MCF 10A (cell line): ENCODE measurements at regions of chr3 and their contacts with region 1.

Region 1: DNA sequence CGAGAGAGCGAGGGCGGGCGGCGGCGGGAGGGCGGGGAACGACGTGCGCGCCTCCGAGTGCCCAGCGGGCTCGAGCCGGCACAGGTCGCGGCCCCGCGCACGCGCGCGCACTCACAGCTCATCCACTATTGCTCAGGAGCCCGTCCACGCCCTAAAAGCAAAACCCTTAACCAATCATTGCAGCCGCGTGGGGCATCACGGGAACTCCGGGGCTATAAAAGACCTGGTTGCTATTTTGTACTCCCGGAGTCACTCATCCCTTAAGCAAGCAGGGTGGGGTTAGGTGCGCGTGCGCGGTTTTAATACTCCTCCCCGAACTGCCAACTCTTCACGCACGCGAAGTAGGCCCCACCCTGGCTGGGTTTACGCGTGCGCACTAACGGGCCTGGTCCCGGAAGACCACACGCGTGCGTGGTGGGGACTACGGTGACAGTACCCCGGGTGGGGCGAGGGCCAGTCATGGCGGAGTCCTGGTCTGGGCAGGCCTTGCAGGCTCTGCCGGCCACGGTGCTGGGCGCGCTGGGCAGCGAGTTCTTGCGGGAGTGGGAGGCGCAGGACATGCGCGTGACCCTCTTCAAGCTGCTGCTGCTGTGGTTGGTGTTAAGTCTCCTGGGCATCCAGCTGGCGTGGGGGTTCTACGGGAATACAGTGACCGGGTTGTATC is at the starts of genes RHOA and TCTA:
- DNase-seq: peak; percentile 100
- H3K4me3 Mint-ChIP-seq: peak within 1 kb of the TSS; percentile 90
- H3K27ac Mint-ChIP-seq: peak within 1 kb of the TSS; percentile 94
- H3K4me1 Mint-ChIP-seq: peaks cover 32% of the 10 kb centered on the region
- H3K27me3 Mint-ChIP-seq: no peaks in the 10 kb centered on the region
- CTCF ChIP-seq: no peak
- total RNA-seq, gene RHOA: 273 and 298 TPM in 2 replicates
- total RNA-seq, gene TCTA: 14.0 and 17.2 TPM in 2 replicates

Region 2: GRCh38 chr3:49295489-49296058 is 116.5 kb before region 1 on chr3:
- CTCF ChIA-PET with region 1: interaction called, 4 read pairs
- POLR2A ChIA-PET with region 1: interaction called, 10 read pairs
- intact Hi-C with region 1: no loop called
- DNase-seq: peak; percentile 35
- H3K4me3 Mint-ChIP-seq: no peak overlapping the region
- H3K27ac Mint-ChIP-seq: peak overlapping the region; percentile 23
- H3K4me1 Mint-ChIP-seq: peaks cover 7% of the 10 kb centered on the region
- H3K27me3 Mint-ChIP-seq: no peaks in the 10 kb centered on the region
- CTCF ChIP-seq: peak; percentile 55

Region 3: GRCh38 chr3:49351521-49352011 is 60.5 kb before region 1 on chr3:
- CTCF ChIA-PET with region 1: no interaction called
- POLR2A ChIA-PET with region 1: interaction called, 49 read pairs
- intact Hi-C with region 1: loop called (anchors 2 kb)
- DNase-seq: peak; percentile 76
- H3K4me3 Mint-ChIP-seq: peak overlapping the region; percentile 45
- H3K27ac Mint-ChIP-seq: peak overlapping the region; percentile 82
- H3K4me1 Mint-ChIP-seq: peaks cover 40% of the 10 kb centered on the region
- H3K27me3 Mint-ChIP-seq: no peaks in the 10 kb centered on the region
- CTCF ChIP-seq: no peak

Region 4: GRCh38 chr3:49377483-49377882 is 34.6 kb before region 1 on chr3:
- CTCF ChIA-PET with region 1: interaction called, 6 read pairs
- POLR2A ChIA-PET with region 1: interaction called, 4 read pairs
- intact Hi-C with region 1: loop called (anchors 5 kb)
- DNase-seq: peak; percentile 60
- H3K4me3 Mint-ChIP-seq: no peak overlapping the region
- H3K27ac Mint-ChIP-seq: peak overlapping the region; percentile 70
- H3K4me1 Mint-ChIP-seq: peaks cover 20% of the 10 kb centered on the region
- H3K27me3 Mint-ChIP-seq: no peaks in the 10 kb centered on the region
- CTCF ChIP-seq: no peak

Region 5: GRCh38 chr3:49428697-49429100 is 16.6 kb after region 1 on chr3:
- CTCF ChIA-PET with region 1: interaction called, 6 read pairs
- POLR2A ChIA-PET with region 1: interaction called, 34 read pairs
- intact Hi-C with region 1: loop called (anchors 1 kb)
- DNase-seq: no peak
- H3K4me3 Mint-ChIP-seq: peak overlapping the region; percentile 89
- H3K27ac Mint-ChIP-seq: peak overlapping the region; percentile 99
- H3K4me1 Mint-ChIP-seq: peaks cover 5% of the 10 kb centered on the region
- H3K27me3 Mint-ChIP-seq: no peaks in the 10 kb centered on the region
- CTCF ChIP-seq: no peak

Region 6: DNA sequence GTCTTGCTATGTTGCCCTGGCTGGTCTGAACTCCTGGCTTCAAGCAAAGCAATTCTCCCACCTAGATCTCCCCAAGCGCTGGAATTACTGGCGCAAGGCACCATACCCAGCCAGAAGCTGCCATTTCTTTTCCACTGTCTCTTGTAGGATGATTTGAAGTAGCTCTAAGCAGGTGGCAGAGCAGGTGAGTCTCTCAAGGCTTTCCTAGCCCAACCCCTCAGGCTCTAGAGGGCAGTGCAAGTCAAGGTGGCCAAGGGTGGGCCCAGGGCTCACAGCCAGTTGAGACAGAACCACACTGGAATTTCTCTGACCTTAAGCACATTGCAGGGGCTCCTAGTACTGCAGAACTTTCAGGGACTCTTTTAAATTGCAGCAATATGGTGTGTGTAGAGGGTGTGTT is 42.4 kb after region 1 on chr3:
- CTCF ChIA-PET with region 1: interaction called, 4 read pairs
- POLR2A ChIA-PET with region 1: interaction called, 4 read pairs
- intact Hi-C with region 1: loop called (anchors 1 kb)
- DNase-seq: peak; percentile 68
- H3K4me3 Mint-ChIP-seq: no peak overlapping the region
- H3K27ac Mint-ChIP-seq: no peak overlapping the region
- H3K4me1 Mint-ChIP-seq: peaks cover 10% of the 10 kb centered on the region
- H3K27me3 Mint-ChIP-seq: no peaks in the 10 kb centered on the region
- CTCF ChIP-seq: no peak

Region 7: DNA sequence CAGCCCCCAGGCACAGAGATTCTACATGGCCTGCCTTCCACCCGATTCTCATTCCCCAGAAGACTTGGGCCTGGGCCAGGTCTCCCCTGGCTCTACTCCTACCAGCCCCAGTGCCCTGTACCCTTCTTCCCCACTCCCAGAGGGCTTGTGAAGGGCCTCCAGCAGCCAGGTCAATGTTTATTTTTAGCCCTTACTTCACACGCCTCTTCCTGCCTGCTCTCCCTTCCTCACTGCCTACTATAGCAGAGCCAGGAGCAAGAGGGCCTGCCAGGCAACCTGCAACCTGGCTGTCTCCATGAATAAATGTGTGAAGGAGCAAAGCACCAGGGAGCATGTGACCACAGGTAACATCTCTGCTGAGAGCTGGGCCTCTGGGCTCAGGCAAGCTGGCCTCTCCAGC is 235.6 kb after region 1 on chr3:
- CTCF ChIA-PET with region 1: no interaction called
- POLR2A ChIA-PET with region 1: no interaction called
- intact Hi-C with region 1: no loop called
- DNase-seq: no peak
- H3K4me3 Mint-ChIP-seq: no peak overlapping the region
- H3K27ac Mint-ChIP-seq: no peak overlapping the region
- H3K4me1 Mint-ChIP-seq: no peaks in the 10 kb centered on the region
- H3K27me3 Mint-ChIP-seq: no peaks in the 10 kb centered on the region
- CTCF ChIP-seq: no peak

Region 8: DNA sequence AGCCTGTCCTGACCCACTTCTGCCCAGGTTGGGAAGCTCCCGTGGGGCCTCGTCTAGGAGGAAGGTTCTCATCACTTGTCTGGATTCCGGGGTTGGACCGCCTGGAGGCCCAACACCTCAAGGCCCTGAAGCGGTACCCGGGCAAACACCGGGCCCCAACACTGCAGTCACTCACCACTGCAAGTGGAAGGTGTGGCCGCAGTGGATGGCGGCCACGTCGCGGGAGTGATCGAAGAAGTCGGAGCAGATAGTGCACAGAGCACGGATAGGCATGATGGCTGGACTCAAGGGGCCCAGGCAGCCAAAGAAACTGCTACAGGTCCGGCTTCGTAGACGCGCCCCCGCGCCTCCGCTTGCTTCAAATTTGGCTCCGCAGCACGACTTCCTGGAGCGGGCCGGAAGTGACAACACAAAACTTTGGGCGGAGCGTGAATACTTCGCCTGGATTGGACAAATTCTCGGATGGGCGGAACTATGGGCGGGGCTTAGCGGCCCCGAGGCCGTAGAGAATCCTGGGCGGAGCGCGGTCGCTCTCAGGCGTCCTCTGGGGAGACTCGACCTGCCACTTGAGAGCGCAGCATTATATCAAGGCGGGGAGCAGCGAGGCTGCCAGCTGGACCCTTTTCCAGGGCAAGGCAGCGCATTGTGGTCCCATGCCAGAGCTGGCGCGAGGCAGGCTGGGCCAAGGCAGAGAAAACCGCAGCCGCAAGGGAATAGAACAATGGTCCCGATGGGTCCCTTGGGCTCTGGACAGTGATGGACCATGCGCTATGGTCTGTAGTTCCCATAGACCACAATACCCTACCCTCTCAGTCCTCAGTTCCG is 444.3 kb after region 1 on chr3 and contains the start of gene TRAIP:
- CTCF ChIA-PET with region 1: no interaction called
- POLR2A ChIA-PET with region 1: no interaction called
- intact Hi-C with region 1: no loop called
- DNase-seq: peak; percentile 96
- H3K4me3 Mint-ChIP-seq: peak within 1 kb of the TSS; percentile 86
- H3K27ac Mint-ChIP-seq: peak within 1 kb of the TSS; percentile 74
- H3K4me1 Mint-ChIP-seq: peaks cover 8% of the 10 kb centered on the region
- H3K27me3 Mint-ChIP-seq: no peaks in the 10 kb centered on the region
- CTCF ChIP-seq: no peak
- total RNA-seq, gene TRAIP: 7.1 and 9.3 TPM in 2 replicates